ENCODE measurements at regions of chr9 and their contacts with region 1.

Region 1: DNA sequence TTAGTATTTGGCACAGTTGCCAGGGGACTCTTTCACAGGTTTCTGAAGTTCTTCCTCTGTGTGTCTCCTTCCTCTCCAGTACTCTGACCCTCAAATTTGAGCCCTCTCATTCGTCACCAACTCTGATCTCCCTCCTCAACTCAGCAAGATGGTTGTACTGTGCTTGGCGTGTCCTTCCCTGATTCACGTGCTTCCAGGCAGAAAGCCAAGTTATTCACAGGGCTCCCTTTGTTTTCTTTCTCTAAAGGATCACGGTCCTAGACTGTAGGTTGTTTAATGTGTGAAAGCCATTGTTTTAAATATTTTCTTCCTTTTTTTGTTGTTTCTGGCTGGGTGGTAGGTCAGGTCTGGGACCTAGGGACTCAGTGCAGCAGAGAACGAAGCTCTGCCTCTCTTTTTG is 142.9 kb downstream of the DMAC1 start:
- DNase-seq: no peak
- ATAC-seq: no peak
- H3K4me3 Mint-ChIP-seq: no peak overlapping the region
- H3K27ac Mint-ChIP-seq: no peak overlapping the region
- H3K4me1 Mint-ChIP-seq: no peaks in the 10 kb centered on the region
- H3K27me3 Mint-ChIP-seq: no peaks in the 10 kb centered on the region

Region 2: GRCh38 chr9:7570107-7570720 is 86.4 kb before region 1 on chr9:
- CTCF ChIA-PET with region 1: interaction called, 22 read pairs
- POLR2A ChIA-PET with region 1: no interaction called
- DNase-seq: peak; percentile 78
- ATAC-seq: peak; percentile 67
- H3K4me3 Mint-ChIP-seq: no peak overlapping the region
- H3K27ac Mint-ChIP-seq: no peak overlapping the region
- H3K4me1 Mint-ChIP-seq: no peaks in the 10 kb centered on the region
- H3K27me3 Mint-ChIP-seq: peaks cover 12% of the 10 kb centered on the region